Esophagus squamous epithelium (tissue), 5 donors: ENCODE measurements at regions of chr14 and their contacts with region 1.

Region 1: GRCh38 chr14:64823305-64823861 is 56.3 kb downstream of the SPTB start:
- DNase-seq: no peak
- H3K4me3 ChIP-seq: no peak overlapping the region
- H3K27ac ChIP-seq: no peak overlapping the region
- H3K4me1 ChIP-seq: peaks cover 0 to 8% (median 5%) of the 10 kb centered on the region in 3 donors
- H3K27me3 ChIP-seq: peaks cover 0 to 29% (median 0%) of the 10 kb centered on the region in 4 donors
- CTCF ChIP-seq: peak; percentile 49 to 84 (median 76)
- POLR2A ChIP-seq: no peak

Region 2: GRCh38 chr14:64986578-64987571 is 163.5 kb after region 1 on chr14 and contains the start of gene FNTB:
- intact Hi-C with region 1: loop called (anchors 10 kb)
- DNase-seq: peak; percentile 68
- H3K4me3 ChIP-seq: peak within 1 kb of the TSS; percentile 73 to 96 (median 84)
- H3K27ac ChIP-seq: peak within 1 kb of the TSS; percentile 87 to 98 (median 94)
- H3K4me1 ChIP-seq: peaks cover 9 to 49% (median 13%) of the 10 kb centered on the region in 3 donors
- H3K27me3 ChIP-seq: no peaks in the 10 kb centered on the region
- CTCF ChIP-seq: peak; percentile 68 to 93 (median 78)
- POLR2A ChIP-seq: peak in 3 of 4 donors; percentile 25 to 83 (median 46)
- total RNA-seq, gene FNTB: 16.2 to 20.4 (median 18.2) TPM